ENCODE measurements at regions of chrX and their contacts with region 1.

Region 1: GRCh38 chrX:41457613-41458192 is 10.6 kb downstream of the NYX start:
- H3K4me3 ChIP-seq: no peak overlapping the region
- H3K27ac ChIP-seq: no peak overlapping the region
- H3K4me1 ChIP-seq: no peaks in the 10 kb centered on the region
- CTCF ChIP-seq: no peak

Region 2: DNA sequence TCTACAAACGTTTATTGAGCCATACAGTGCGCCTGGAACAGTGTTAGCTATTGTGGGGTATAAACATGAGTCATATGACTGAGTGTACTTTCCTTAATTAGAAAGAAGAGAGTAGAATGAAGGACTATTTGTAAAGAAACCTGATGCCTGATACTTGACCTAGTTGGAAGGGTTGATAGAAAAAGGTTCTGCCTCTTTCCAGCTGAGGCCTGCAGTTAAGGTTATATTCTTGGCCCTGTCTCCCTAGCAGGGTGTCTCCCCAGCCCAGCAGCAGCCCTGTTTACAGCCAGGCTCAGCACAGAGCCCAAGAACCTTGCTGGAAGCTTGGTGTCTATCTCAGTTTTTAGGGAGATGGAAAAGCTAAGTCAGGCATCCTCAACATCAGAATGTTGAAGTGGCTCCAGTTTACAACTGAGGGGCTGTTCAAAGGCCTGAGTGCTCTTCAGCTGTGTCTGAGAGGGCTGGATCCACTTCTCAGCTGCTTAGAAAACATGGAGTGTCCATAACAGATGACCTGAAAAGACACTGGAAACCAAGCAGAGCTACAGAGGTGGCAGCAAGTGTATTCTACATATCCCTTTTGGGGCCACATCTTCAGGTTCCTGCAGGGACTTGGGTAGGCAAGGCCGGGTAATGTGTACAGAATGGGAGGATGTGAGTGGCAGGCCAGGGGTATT is 11.1 kb after region 1 on chrX:
- CTCF ChIA-PET with region 1: interaction called, 13 read pairs
- POLR2A ChIA-PET with region 1: no interaction called
- H3K4me3 ChIP-seq: no peak overlapping the region
- H3K27ac ChIP-seq: peak overlapping the region; percentile 62
- H3K4me1 ChIP-seq: peaks cover 7% of the 10 kb centered on the region
- CTCF ChIP-seq: no peak

Region 3: DNA sequence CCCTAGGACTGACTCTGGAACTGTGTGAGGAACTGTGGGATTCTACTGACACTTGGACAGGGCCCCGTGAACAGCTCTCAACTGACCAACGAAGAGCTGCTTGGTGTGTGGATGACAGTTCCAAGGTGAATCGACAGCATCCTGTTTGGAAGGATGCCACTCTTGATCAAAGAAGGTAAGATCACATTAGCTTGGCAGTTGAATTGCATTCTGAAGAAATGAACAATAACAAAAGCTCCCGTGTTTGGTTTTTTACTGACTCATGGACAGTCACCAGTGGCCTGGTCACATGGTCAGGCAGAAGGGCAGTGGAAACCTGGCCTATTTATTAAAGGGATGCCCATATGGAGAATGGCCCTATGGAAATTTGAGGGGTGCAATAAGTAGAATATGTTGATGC is 197.9 kb after region 1 on chrX:
- CTCF ChIA-PET with region 1: no interaction called
- POLR2A ChIA-PET with region 1: no interaction called
- H3K4me3 ChIP-seq: no peak overlapping the region
- H3K27ac ChIP-seq: no peak overlapping the region
- H3K4me1 ChIP-seq: no peaks in the 10 kb centered on the region
- CTCF ChIP-seq: no peak

Measured in HEK293 (cell line).